ENCODE measurements at regions of chr17 and their contacts with region 1.

Region 1: GRCh38 chr17:68057531-68057952 is 22.0 kb downstream of the KPNA2 start:
- DNase-seq: peak in 32 of 35 experiments; percentile 12 to 62 (median 37)
- ATAC-seq: peak; percentile 67 to 87 (median 78)
- H3K4me3 ChIP-seq: no peak overlapping the region
- H3K4me3 Mint-ChIP-seq: no peak overlapping the region
- H3K27ac ChIP-seq: no peak overlapping the region
- H3K27ac Mint-ChIP-seq: no peak overlapping the region
- H3K4me1 ChIP-seq: peaks cover 0 to 5% of the 10 kb centered on the region in 2 experiments
- H3K4me1 Mint-ChIP-seq: peaks cover 0 to 41% (median 4%) of the 10 kb centered on the region in 3 donors
- H3K27me3 ChIP-seq: peaks cover 0 to 3% of the 10 kb centered on the region in 2 experiments
- H3K27me3 Mint-ChIP-seq: no peaks in the 10 kb centered on the region

Region 2: DNA sequence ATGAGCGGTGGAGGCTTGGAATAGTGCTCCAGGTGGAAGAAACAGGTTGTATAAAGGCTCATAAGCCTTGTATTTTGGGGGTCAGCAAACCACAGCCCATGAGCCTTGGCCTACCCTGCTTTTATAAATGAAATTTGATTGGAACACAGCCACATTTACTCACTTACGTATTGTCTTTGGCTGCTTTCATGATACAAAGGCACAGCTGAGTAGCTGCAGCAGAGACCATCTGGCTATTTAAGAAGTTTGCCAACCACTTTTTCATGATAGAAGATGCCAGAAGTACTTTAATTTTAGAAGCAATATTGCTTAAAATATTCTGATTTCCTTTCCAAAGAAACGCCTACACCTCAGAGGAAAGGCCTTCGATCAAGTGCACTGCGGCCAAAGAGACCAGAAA is 135.0 kb before region 1 on chr17:
- CTCF ChIA-PET with region 1: no interaction called
- POLR2A ChIA-PET with region 1: interaction called in 1 of 2 experiments, 10 read pairs
- DNase-seq: no peak
- ATAC-seq: no peak
- H3K4me3 ChIP-seq: no peak overlapping the region
- H3K4me3 Mint-ChIP-seq: no peak overlapping the region
- H3K27ac ChIP-seq: no peak overlapping the region
- H3K27ac Mint-ChIP-seq: peak overlapping the region in 1 of 2 donors; percentile 41
- H3K4me1 ChIP-seq: no peaks in the 10 kb centered on the region
- H3K4me1 Mint-ChIP-seq: no peaks in the 10 kb centered on the region
- H3K27me3 ChIP-seq: no peaks in the 10 kb centered on the region
- H3K27me3 Mint-ChIP-seq: no peaks in the 10 kb centered on the region

Region 3: DNA sequence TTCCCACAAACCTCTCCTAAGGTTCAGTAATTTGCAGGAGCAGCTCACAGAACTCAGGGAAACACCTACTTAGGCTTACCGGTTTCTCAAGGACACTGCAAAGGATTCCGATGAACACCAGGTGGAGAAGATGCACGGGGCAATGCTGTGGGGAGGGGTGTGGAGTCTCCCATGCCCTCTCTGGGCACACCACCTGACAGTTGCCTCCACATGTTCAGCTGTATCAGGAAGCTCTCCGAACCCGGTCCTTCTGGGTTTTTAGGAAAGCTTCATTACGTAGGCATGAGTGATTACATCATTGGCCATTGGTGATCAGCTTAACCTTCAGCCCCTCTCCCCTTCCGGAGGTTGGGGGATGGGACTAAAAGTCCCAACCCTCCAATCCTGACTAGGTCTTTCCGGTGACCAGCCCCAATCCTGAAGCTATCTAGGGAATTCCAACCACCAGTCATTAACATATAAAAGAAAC is 82.9 kb before region 1 on chr17:
- CTCF ChIA-PET with region 1: no interaction called
- POLR2A ChIA-PET with region 1: interaction called in 1 of 2 experiments, 10 read pairs
- DNase-seq: no peak
- ATAC-seq: no peak
- H3K4me3 ChIP-seq: no peak overlapping the region
- H3K4me3 Mint-ChIP-seq: no peak overlapping the region
- H3K27ac ChIP-seq: no peak overlapping the region
- H3K27ac Mint-ChIP-seq: no peak overlapping the region
- H3K4me1 ChIP-seq: no peaks in the 10 kb centered on the region
- H3K4me1 Mint-ChIP-seq: no peaks in the 10 kb centered on the region
- H3K27me3 ChIP-seq: no peaks in the 10 kb centered on the region
- H3K27me3 Mint-ChIP-seq: no peaks in the 10 kb centered on the region

Region 4: GRCh38 chr17:68106085-68106484 is 48.5 kb after region 1 on chr17:
- CTCF ChIA-PET with region 1: no interaction called
- POLR2A ChIA-PET with region 1: no interaction called
- DNase-seq: no peak
- ATAC-seq: no peak
- H3K4me3 ChIP-seq: no peak overlapping the region
- H3K4me3 Mint-ChIP-seq: no peak overlapping the region
- H3K27ac ChIP-seq: no peak overlapping the region
- H3K27ac Mint-ChIP-seq: peak overlapping the region; percentile 2 to 53
- H3K4me1 ChIP-seq: peaks cover 11 to 18% of the 10 kb centered on the region in 2 experiments
- H3K4me1 Mint-ChIP-seq: peaks cover 54 to 61% (median 55%) of the 10 kb centered on the region in 3 donors
- H3K27me3 ChIP-seq: no peaks in the 10 kb centered on the region
- H3K27me3 Mint-ChIP-seq: no peaks in the 10 kb centered on the region

Measured in T-cell (primary cell).